ENCODE measurements at regions of chr3 and their contacts with region 1.

Region 1: GRCh38 chr3:147231111-147231510 is 175.2 kb downstream of the ZIC4 start:
- DNase-seq: no peak
- ATAC-seq: no peak
- H3K4me3 ChIP-seq: no peak overlapping the region
- H3K27ac ChIP-seq: no peak overlapping the region
- H3K4me1 ChIP-seq: no peaks in the 10 kb centered on the region
- H3K27me3 ChIP-seq: peaks cover 0 to 1% of the 10 kb centered on the region in 2 donors

Region 2: DNA sequence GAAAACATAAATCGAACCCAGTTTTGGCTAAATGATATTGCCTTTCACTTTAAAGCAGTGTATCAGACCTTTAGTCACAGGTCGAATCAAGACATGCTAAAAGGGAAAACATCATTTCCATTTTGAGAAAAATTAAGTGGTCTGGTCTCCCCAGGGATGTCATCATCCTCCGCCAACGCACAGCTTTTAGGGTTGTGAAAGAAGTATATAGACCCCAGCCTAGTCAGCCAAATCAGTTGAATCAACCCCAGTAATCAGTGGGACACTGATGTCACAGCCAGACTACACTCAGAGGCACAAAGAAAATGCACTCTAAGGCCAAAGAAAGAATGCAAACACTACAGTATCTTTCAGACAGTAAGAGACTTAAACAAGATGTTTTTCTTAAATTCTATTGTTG is 12.1 kb before region 1 on chr3:
- intact Hi-C with region 1: loop called in 1 of 2 experiments (anchors 1 kb)
- DNase-seq: no peak
- ATAC-seq: no peak
- H3K4me3 ChIP-seq: no peak overlapping the region
- H3K27ac ChIP-seq: no peak overlapping the region
- H3K4me1 ChIP-seq: no peaks in the 10 kb centered on the region
- H3K27me3 ChIP-seq: no peaks in the 10 kb centered on the region

Region 3: GRCh38 chr3:147960790-147961189 is 729.7 kb after region 1 on chr3:
- intact Hi-C with region 1: no loop called
- DNase-seq: no peak
- ATAC-seq: no peak
- H3K4me3 ChIP-seq: no peak overlapping the region
- H3K27ac ChIP-seq: no peak overlapping the region
- H3K4me1 ChIP-seq: no peaks in the 10 kb centered on the region
- H3K27me3 ChIP-seq: no peaks in the 10 kb centered on the region